Activated naive CD4-positive, alpha-beta T cell treated with anti-CD3 and anti-CD28 coated beads for 36 hours (primary cell): ENCODE measurements at regions of chr12 and their contacts with region 1.

Region 1: DNA sequence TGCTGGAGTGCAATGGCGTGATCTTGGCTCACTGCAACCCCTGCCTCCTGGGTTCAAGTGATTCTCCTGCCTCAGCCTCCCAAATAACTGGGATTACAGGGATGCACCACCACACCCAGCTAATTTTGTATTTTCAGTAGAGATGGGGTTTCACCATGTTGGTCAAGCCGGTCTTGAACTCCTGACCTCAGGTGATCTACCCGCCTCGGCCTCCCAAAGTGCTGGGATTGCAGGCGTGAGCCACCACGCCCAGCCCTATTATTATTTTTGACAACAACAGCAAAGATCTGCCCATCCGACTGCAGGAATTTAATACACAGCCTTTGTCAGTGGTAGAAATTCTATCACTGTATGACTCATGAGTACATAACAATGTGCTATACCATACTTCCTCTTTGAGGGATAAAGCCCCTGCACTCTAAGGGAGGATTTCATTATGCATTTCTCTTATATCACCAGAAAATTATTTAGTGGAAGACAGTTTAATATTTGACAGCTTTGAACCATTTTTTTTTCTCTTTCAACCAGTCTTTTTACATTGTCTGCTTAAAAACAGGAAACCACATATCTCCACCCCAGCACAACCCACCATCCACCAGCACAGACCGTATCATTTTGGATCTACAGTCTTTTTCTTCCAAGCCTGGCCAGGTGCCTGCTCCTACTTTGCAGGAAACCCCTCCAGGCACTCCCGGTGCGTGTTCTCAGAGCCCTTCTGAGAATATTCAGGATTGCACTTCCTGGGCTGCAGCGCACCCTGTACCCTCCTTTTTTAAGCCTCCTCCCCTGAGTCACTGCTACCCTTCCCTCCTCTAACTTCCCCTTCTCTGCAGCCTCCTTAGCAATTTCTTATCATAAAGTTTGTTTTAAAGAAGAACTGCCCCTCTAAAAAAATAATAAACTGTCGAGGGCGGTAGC is 594 bp downstream of the ARHGDIB start:
- DNase-seq: peak; percentile 39
- H3K4me3 Mint-ChIP-seq: peak overlapping the region; percentile 98
- H3K27ac Mint-ChIP-seq: peak overlapping the region; percentile 100
- H3K4me1 Mint-ChIP-seq: peaks cover 43% of the 10 kb centered on the region
- H3K27me3 Mint-ChIP-seq: no peaks in the 10 kb centered on the region

Region 2: GRCh38 chr12:14216405-14217294 is 744.2 kb before region 1 on chr12:
- CTCF ChIA-PET with region 1: no interaction called
- intact Hi-C with region 1: loop called (anchors 2 kb)
- DNase-seq: no peak
- H3K4me3 Mint-ChIP-seq: no peak overlapping the region
- H3K27ac Mint-ChIP-seq: peak overlapping the region; percentile 70
- H3K4me1 Mint-ChIP-seq: peaks cover 24% of the 10 kb centered on the region
- H3K27me3 Mint-ChIP-seq: no peaks in the 10 kb centered on the region

Region 3: GRCh38 chr12:14365294-14366208 is 595.3 kb before region 1 on chr12 and contains the start of gene ATF7IP:
- CTCF ChIA-PET with region 1: no interaction called
- intact Hi-C with region 1: loop called (anchors 1 kb)
- DNase-seq: peak; percentile 98
- H3K4me3 Mint-ChIP-seq: peak within 1 kb of the TSS; percentile 85
- H3K27ac Mint-ChIP-seq: peak within 1 kb of the TSS; percentile 98
- H3K4me1 Mint-ChIP-seq: peaks cover 38% of the 10 kb centered on the region
- H3K27me3 Mint-ChIP-seq: no peaks in the 10 kb centered on the region
- total RNA-seq, gene ATF7IP: 131 to 141 TPM

Region 4: GRCh38 chr12:14769969-14770495 is 190.8 kb before region 1 on chr12:
- CTCF ChIA-PET with region 1: interaction called, 3 read pairs
- intact Hi-C with region 1: loop called (anchors 1 kb)
- DNase-seq: peak; percentile 89
- H3K4me3 Mint-ChIP-seq: peak overlapping the region; percentile 97
- H3K27ac Mint-ChIP-seq: peak overlapping the region; percentile 98
- H3K4me1 Mint-ChIP-seq: peaks cover 38% of the 10 kb centered on the region
- H3K27me3 Mint-ChIP-seq: no peaks in the 10 kb centered on the region

Region 5: GRCh38 chr12:14803011-14803829 is 157.6 kb before region 1 on chr12 and contains the starts of genes C12orf60 and WBP11:
- CTCF ChIA-PET with region 1: no interaction called
- intact Hi-C with region 1: loop called (anchors 1 kb)
- DNase-seq: peak; percentile 94
- H3K4me3 Mint-ChIP-seq: no peak within 1 kb of the TSS
- H3K27ac Mint-ChIP-seq: no peak within 1 kb of the TSS
- H3K4me1 Mint-ChIP-seq: peaks cover 34% of the 10 kb centered on the region
- H3K27me3 Mint-ChIP-seq: no peaks in the 10 kb centered on the region
- total RNA-seq, gene C12orf60: 2.0 to 3.1 TPM
- total RNA-seq, gene WBP11: 105 to 115 TPM

Region 6: GRCh38 chr12:14937689-14938088 is 23.1 kb before region 1 on chr12:
- CTCF ChIA-PET with region 1: interaction called, 3 read pairs
- intact Hi-C with region 1: loop called (anchors 1 kb)
- DNase-seq: peak; percentile 41
- H3K4me3 Mint-ChIP-seq: no peak overlapping the region
- H3K27ac Mint-ChIP-seq: no peak overlapping the region
- H3K4me1 Mint-ChIP-seq: peaks cover 43% of the 10 kb centered on the region
- H3K27me3 Mint-ChIP-seq: no peaks in the 10 kb centered on the region

Region 7: GRCh38 chr12:15563663-15564062 is 602.9 kb after region 1 on chr12:
- CTCF ChIA-PET with region 1: no interaction called
- intact Hi-C with region 1: loop called (anchors 2 kb)
- DNase-seq: peak; percentile 67
- H3K4me3 Mint-ChIP-seq: peak overlapping the region; percentile 58
- H3K27ac Mint-ChIP-seq: peak overlapping the region; percentile 90
- H3K4me1 Mint-ChIP-seq: peaks cover 81% of the 10 kb centered on the region
- H3K27me3 Mint-ChIP-seq: no peaks in the 10 kb centered on the region